ENCODE measurements at regions of chr17 and their contacts with region 1.

Region 1: GRCh38 chr17:58112970-58113631 is 29.9 kb downstream of the DYNLL2 start:
- H3K4me3 Mint-ChIP-seq: no peak overlapping the region
- H3K27ac Mint-ChIP-seq: no peak overlapping the region
- H3K4me1 Mint-ChIP-seq: no peaks in the 10 kb centered on the region
- H3K27me3 Mint-ChIP-seq: peaks cover 21% of the 10 kb centered on the region

Region 2: GRCh38 chr17:57130761-57131461 is 982.2 kb before region 1 on chr17:
- intact Hi-C with region 1: loop called (anchors 10 kb)
- H3K4me3 Mint-ChIP-seq: no peak overlapping the region
- H3K27ac Mint-ChIP-seq: no peak overlapping the region
- H3K4me1 Mint-ChIP-seq: peaks cover 6% of the 10 kb centered on the region
- H3K27me3 Mint-ChIP-seq: peaks cover 15% of the 10 kb centered on the region

Region 3: DNA sequence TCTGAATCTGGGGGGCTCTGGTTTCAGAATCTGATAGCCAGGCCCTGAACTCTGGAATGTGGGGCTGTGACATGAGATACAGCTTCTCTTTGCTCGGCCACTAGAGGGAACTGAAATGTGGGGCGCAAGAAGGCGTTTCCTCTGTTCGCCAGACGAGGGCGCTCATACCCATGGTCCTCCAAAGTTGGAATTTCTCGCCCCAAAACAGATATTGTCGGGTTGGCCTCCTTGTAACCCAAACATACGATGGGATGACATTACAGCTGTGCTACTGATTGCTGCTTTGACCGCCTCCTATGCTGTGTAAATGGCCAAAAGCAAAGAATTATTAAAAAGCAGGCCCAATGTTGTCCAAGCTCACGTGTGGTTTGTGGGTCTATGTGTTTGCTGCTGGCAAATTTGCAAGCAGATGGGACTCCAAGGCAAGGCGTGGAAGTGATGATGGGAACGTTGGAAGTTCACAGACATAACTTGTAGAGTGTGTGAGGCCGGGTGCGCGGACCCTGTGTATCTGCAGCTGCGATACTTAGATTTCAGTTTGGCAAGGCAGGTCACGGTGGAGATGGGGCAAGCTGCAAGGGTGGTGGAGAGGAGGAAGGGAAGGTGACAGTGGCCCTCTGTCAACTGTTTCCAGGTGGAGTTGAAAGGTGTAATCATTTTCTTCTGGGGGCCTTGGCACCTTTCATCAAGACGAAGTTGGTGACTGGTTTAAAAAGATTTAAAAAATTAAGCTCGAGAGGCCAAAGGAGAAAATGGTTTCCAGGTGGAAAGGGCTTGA is 869.7 kb before region 1 on chr17:
- intact Hi-C with region 1: loop called (anchors 10 kb)
- H3K4me3 Mint-ChIP-seq: no peak overlapping the region
- H3K27ac Mint-ChIP-seq: no peak overlapping the region
- H3K4me1 Mint-ChIP-seq: no peaks in the 10 kb centered on the region
- H3K27me3 Mint-ChIP-seq: peaks cover 4% of the 10 kb centered on the region

Region 4: GRCh38 chr17:57861000-57861789 is 251.9 kb before region 1 on chr17:
- intact Hi-C with region 1: loop called (anchors 2 kb)
- H3K4me3 Mint-ChIP-seq: peak overlapping the region; percentile 84
- H3K27ac Mint-ChIP-seq: peak overlapping the region; percentile 97
- H3K4me1 Mint-ChIP-seq: peaks cover 44% of the 10 kb centered on the region
- H3K27me3 Mint-ChIP-seq: peaks cover 25% of the 10 kb centered on the region

Region 5: GRCh38 chr17:57995076-57995956 is 117.8 kb before region 1 on chr17:
- intact Hi-C with region 1: loop called (anchors 5 kb)
- H3K4me3 Mint-ChIP-seq: no peak overlapping the region
- H3K27ac Mint-ChIP-seq: no peak overlapping the region
- H3K4me1 Mint-ChIP-seq: peaks cover 17% of the 10 kb centered on the region
- H3K27me3 Mint-ChIP-seq: no peaks in the 10 kb centered on the region

Measured in dendritic cell treated with granulocyte-macrophage colony-stimulating factor and Interleukin-4, amounts not matched to agents 40 ng/mL and 50 ng/mL, for 4 days (primary cell).